ENCODE measurements at regions of chr3 and their contacts with region 1.

Region 1: GRCh38 chr3:161423911-161424522 is 52.7 kb upstream of the SPTSSB start:
- DNase-seq: peak in 6 of 9 donors; percentile 29 to 54 (median 48)
- ATAC-seq: peak; percentile 61
- H3K4me3 ChIP-seq: no peak overlapping the region
- H3K4me3 Mint-ChIP-seq: no peak overlapping the region
- H3K27ac ChIP-seq: no peak overlapping the region
- H3K27ac Mint-ChIP-seq: no peak overlapping the region
- H3K4me1 ChIP-seq: no peaks in the 10 kb centered on the region
- H3K4me1 Mint-ChIP-seq: peaks cover 0 to 6% (median 3%) of the 10 kb centered on the region in 7 donors
- H3K27me3 ChIP-seq: no peaks in the 10 kb centered on the region
- H3K27me3 Mint-ChIP-seq: peaks cover 0 to 10% (median 5%) of the 10 kb centered on the region in 5 donors

Region 2: GRCh38 chr3:160686955-160687535 is 737.0 kb before region 1 on chr3:
- CTCF ChIA-PET with region 1: no interaction called
- POLR2A ChIA-PET with region 1: no interaction called
- intact Hi-C with region 1: loop called in 1 of 2 experiments (anchors 1 kb)
- DNase-seq: peak in 1 of 9 donors; percentile 6
- ATAC-seq: peak; percentile 40
- H3K4me3 ChIP-seq: no peak overlapping the region
- H3K4me3 Mint-ChIP-seq: no peak overlapping the region
- H3K27ac ChIP-seq: no peak overlapping the region
- H3K27ac Mint-ChIP-seq: no peak overlapping the region
- H3K4me1 ChIP-seq: no peaks in the 10 kb centered on the region
- H3K4me1 Mint-ChIP-seq: no peaks in the 10 kb centered on the region
- H3K27me3 ChIP-seq: no peaks in the 10 kb centered on the region
- H3K27me3 Mint-ChIP-seq: peaks cover 0 to 7% (median 0%) of the 10 kb centered on the region in 5 donors

Region 3: DNA sequence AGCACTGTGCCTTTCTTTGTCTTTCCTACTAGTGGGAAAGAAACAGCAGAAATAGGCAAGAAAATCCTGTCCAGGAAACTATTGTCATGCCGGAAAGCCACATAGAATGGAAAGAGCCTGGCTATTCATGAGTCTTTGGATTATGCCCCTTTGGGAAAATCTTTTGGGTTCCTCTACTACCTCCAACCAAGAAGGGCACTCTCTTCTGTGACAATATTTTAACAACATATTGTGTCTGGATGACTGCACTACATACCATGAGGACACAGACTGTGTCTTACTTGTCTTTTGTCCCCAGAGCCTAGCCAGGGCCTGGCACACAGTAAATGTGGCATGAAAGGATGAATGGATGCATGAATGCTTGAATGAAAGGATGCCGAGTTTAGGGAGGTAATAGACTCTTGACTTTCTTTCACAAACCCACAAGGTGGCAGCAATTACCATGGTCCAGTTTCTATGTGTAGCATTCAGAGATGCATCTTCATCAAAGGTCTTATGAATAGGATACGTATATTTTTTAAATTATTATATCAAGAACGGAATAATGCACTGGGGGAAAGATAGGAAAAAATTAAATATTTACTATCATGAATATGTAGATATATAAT is 716.7 kb before region 1 on chr3:
- CTCF ChIA-PET with region 1: no interaction called
- POLR2A ChIA-PET with region 1: no interaction called
- intact Hi-C with region 1: loop called (anchors 1 kb)
- DNase-seq: peak in 7 of 9 donors; percentile 18 to 62 (median 47)
- ATAC-seq: peak; percentile 71
- H3K4me3 ChIP-seq: no peak overlapping the region
- H3K4me3 Mint-ChIP-seq: no peak overlapping the region
- H3K27ac ChIP-seq: no peak overlapping the region
- H3K27ac Mint-ChIP-seq: no peak overlapping the region
- H3K4me1 ChIP-seq: no peaks in the 10 kb centered on the region
- H3K4me1 Mint-ChIP-seq: no peaks in the 10 kb centered on the region
- H3K27me3 ChIP-seq: peaks cover 0 to 5% of the 10 kb centered on the region in 2 donors
- H3K27me3 Mint-ChIP-seq: peaks cover 28 to 43% (median 36%) of the 10 kb centered on the region in 5 donors

Region 4: GRCh38 chr3:160956806-160957205 is 467.2 kb before region 1 on chr3:
- CTCF ChIA-PET with region 1: no interaction called
- POLR2A ChIA-PET with region 1: no interaction called
- intact Hi-C with region 1: loop called in 1 of 2 experiments (anchors 2 kb)
- DNase-seq: no peak
- ATAC-seq: peak; percentile 63
- H3K4me3 ChIP-seq: no peak overlapping the region
- H3K4me3 Mint-ChIP-seq: no peak overlapping the region
- H3K27ac ChIP-seq: no peak overlapping the region
- H3K27ac Mint-ChIP-seq: no peak overlapping the region
- H3K4me1 ChIP-seq: no peaks in the 10 kb centered on the region
- H3K4me1 Mint-ChIP-seq: no peaks in the 10 kb centered on the region
- H3K27me3 ChIP-seq: peaks cover 0 to 2% of the 10 kb centered on the region in 2 donors
- H3K27me3 Mint-ChIP-seq: peaks cover 0 to 15% (median 8%) of the 10 kb centered on the region in 5 donors

Region 5: DNA sequence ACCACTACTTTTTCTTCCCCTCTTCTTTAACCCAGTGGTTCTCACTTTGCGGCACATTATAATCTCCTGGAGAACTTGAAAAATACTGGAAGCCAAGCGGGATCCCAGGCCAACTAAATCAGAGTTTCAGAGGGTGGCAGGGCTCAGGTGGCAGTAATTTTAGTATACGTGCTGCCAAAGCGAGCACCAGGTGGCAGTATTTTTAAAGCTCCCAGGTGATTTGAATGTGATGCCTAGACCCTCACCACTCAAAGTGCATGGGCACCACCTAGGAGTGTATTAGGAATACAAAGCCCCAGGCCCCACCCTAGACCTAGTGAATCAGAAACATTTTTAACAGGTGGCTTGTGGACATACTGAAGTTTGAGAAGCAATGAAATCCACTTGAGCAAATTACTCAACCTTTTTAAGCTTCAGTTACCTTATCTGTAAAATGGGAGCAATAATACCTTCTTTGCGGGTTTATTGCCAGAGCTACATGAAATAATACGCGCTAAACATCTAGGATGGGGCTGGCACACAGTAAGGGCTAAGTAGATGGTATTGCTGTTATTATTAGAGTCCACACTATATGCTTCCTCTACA is 327.2 kb before region 1 on chr3:
- CTCF ChIA-PET with region 1: interaction called, 5 read pairs
- POLR2A ChIA-PET with region 1: no interaction called
- intact Hi-C with region 1: loop called (anchors 1 to 5 kb)
- DNase-seq: peak in 5 of 9 donors; percentile 8 to 34 (median 21)
- ATAC-seq: no peak
- H3K4me3 ChIP-seq: no peak overlapping the region
- H3K4me3 Mint-ChIP-seq: no peak overlapping the region
- H3K27ac ChIP-seq: no peak overlapping the region
- H3K27ac Mint-ChIP-seq: no peak overlapping the region
- H3K4me1 ChIP-seq: no peaks in the 10 kb centered on the region
- H3K4me1 Mint-ChIP-seq: peaks cover 0 to 2% (median 0%) of the 10 kb centered on the region in 7 donors
- H3K27me3 ChIP-seq: no peaks in the 10 kb centered on the region
- H3K27me3 Mint-ChIP-seq: peaks cover 0 to 8% (median 0%) of the 10 kb centered on the region in 5 donors

Region 6: DNA sequence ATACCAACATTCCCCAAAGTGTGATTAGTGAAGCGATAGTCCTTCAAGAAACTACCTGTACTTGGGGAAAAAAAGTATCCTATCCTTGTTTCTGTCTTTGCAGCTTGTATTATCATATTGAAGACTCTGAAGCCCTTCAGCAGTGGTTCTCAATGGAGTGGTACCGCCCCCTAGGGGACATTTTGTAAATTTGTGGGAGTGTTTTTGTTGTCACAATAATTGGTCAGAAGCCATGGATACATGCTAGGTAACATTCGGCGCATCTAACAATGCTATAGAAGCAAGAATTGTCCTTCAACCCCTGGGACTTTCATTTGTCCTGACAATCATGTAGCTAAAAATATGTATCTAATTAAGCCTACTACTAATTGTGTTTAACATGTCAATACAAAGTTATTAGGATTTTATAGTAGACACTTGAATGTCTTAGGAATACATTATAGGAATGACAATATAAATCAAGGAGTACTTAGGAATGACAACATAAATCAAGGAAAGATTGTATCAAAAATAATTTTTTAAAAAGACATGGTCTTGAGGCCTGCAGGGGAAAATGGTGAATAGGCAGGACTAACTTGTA is 149.2 kb before region 1 on chr3:
- CTCF ChIA-PET with region 1: interaction called, 19 read pairs
- POLR2A ChIA-PET with region 1: interaction called, 3 read pairs
- intact Hi-C with region 1: loop called (anchors 1 kb)
- DNase-seq: peak in 8 of 9 donors; percentile 13 to 52 (median 34)
- ATAC-seq: peak; percentile 57
- H3K4me3 ChIP-seq: no peak overlapping the region
- H3K4me3 Mint-ChIP-seq: no peak overlapping the region
- H3K27ac ChIP-seq: no peak overlapping the region
- H3K27ac Mint-ChIP-seq: peak overlapping the region in 1 of 9 donors; percentile 59
- H3K4me1 ChIP-seq: no peaks in the 10 kb centered on the region
- H3K4me1 Mint-ChIP-seq: peaks cover 0 to 9% (median 3%) of the 10 kb centered on the region in 7 donors
- H3K27me3 ChIP-seq: no peaks in the 10 kb centered on the region
- H3K27me3 Mint-ChIP-seq: peaks cover 0 to 4% (median 0%) of the 10 kb centered on the region in 5 donors

Region 7: DNA sequence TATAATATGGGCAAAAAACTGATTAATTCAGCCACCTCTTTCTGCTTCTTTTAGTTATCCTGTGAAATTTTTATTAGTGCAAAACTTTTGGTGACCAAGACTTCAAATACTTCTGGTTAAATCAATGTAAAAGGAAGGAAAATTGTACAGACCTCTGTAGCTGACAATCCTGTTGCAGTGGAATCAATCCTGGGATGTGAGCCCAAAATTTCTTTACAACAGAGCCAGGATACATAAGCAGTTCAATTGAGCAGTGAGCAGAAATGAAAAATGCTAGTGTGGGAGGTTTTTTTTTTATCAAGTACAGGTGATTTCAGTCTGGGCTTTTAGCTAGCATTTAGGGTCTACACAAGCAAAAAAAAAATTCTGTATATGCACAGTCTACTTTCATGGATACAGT is 470.6 kb after region 1 on chr3:
- CTCF ChIA-PET with region 1: no interaction called
- POLR2A ChIA-PET with region 1: no interaction called
- intact Hi-C with region 1: no loop called
- DNase-seq: no peak
- ATAC-seq: no peak
- H3K4me3 ChIP-seq: no peak overlapping the region
- H3K4me3 Mint-ChIP-seq: no peak overlapping the region
- H3K27ac ChIP-seq: no peak overlapping the region
- H3K27ac Mint-ChIP-seq: no peak overlapping the region
- H3K4me1 ChIP-seq: no peaks in the 10 kb centered on the region
- H3K4me1 Mint-ChIP-seq: no peaks in the 10 kb centered on the region
- H3K27me3 ChIP-seq: no peaks in the 10 kb centered on the region
- H3K27me3 Mint-ChIP-seq: no peaks in the 10 kb centered on the region

Measured in naive thymus-derived CD4-positive, alpha-beta T cell (primary cell).